Heart right ventricle (tissue), 16 donors: ENCODE measurements at regions of chr9 and their contacts with region 1.

Region 1: DNA sequence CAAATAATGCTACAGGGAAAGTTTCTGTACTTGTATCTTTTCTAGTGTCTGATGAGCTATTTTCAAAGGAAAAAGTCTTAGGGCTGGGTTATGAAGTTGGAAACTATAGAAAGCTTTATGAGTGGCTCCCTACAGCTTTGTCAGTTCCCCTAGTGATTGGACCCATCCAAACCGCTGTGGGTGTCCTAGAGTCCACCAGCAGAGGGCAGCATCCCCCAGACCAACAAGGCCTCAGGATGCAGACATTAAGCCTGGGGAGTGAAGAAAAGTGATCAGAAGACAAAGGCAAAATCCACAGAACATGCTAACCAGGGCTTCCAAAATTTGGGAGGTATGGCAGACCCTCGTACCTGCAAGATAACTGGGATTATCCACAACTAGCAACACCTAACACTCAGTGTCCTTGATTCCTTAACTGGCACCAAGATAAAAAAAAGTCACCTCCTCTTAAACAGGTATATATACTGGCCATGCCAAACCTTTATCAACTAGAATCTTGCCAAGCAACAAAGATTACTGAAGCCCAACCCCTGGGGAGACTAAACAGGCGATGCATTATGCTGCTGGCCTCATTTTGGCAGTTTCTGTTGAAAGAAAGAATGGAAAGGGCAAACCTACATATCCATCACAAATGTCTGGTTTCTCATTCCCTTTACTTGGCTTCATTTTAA is 110.4 kb upstream of the NR5A1 start:
- DNase-seq: peak; percentile 72 to 80
- ATAC-seq: peak; percentile 80 to 95 (median 89)
- H3K4me3 ChIP-seq: no peak overlapping the region
- H3K27ac ChIP-seq: no peak overlapping the region
- H3K4me1 ChIP-seq: peaks cover 0 to 12% (median 4%) of the 10 kb centered on the region in 9 donors
- H3K27me3 ChIP-seq: peaks cover 0 to 3% (median 0%) of the 10 kb centered on the region in 7 donors
- CTCF ChIP-seq: peak; percentile 71 to 95 (median 89)

Region 2: DNA sequence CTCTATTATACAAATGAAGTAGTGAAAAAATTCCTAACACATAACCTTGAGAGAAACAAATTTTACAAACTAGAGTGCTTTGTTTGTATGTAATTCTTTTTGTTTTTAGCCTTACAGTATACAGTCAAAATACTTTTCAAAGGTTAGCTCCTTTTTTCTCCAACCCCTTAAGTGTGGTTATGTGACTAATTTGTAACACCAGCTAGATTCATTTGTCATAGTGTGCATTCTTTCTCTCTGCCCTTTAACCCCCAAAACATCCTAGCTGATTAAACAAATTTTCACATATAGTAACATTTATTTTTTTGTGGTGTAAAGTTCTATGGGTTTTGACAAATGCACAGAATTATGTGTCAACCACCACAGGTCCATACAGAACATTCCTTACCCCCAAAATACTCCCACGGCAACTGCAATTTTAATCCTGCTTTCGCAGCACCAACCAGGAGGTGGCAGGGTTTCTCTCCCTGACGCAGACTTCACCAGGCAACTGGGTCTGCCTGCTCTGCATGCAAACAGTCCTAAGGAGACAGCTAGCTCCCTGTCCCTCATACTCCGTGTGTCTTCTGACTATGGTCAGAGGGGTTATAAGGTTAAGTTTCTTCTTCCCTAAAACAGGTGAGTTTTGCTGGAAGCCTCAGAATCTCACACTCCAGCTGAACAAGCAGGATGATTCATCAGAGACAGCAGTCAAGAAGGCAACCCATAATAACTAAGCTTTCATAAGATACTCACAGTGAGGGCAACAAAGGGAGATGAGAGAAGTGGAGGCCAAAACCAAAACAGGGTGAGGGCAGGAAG is 65.9 kb before region 1 on chr9:
- intact Hi-C with region 1: loop called in 1 of 10 experiments (anchors 5 kb)
- DNase-seq: peak in 1 of 2 donors; percentile 30
- ATAC-seq: peak in 7 of 8 donors; percentile 66 to 84 (median 75)
- H3K4me3 ChIP-seq: no peak overlapping the region
- H3K27ac ChIP-seq: no peak overlapping the region
- H3K4me1 ChIP-seq: peaks cover 0 to 10% (median 0%) of the 10 kb centered on the region in 9 donors
- H3K27me3 ChIP-seq: no peaks in the 10 kb centered on the region
- CTCF ChIP-seq: peak in 7 of 9 donors; percentile 47 to 70 (median 60)

Region 3: GRCh38 chr9:124652203-124652992 is 34.8 kb after region 1 on chr9:
- intact Hi-C with region 1: loop called in 3 of 10 experiments (anchors 2 to 5 kb)
- DNase-seq: peak in 1 of 2 donors; percentile 23
- ATAC-seq: peak; percentile 49 to 96 (median 86)
- H3K4me3 ChIP-seq: no peak overlapping the region
- H3K27ac ChIP-seq: peak overlapping the region in 6 of 10 donors; percentile 10 to 72 (median 58)
- H3K4me1 ChIP-seq: peaks cover 0 to 17% (median under 1%) of the 10 kb centered on the region in 9 donors
- H3K27me3 ChIP-seq: no peaks in the 10 kb centered on the region
- CTCF ChIP-seq: no peak

Region 4: DNA sequence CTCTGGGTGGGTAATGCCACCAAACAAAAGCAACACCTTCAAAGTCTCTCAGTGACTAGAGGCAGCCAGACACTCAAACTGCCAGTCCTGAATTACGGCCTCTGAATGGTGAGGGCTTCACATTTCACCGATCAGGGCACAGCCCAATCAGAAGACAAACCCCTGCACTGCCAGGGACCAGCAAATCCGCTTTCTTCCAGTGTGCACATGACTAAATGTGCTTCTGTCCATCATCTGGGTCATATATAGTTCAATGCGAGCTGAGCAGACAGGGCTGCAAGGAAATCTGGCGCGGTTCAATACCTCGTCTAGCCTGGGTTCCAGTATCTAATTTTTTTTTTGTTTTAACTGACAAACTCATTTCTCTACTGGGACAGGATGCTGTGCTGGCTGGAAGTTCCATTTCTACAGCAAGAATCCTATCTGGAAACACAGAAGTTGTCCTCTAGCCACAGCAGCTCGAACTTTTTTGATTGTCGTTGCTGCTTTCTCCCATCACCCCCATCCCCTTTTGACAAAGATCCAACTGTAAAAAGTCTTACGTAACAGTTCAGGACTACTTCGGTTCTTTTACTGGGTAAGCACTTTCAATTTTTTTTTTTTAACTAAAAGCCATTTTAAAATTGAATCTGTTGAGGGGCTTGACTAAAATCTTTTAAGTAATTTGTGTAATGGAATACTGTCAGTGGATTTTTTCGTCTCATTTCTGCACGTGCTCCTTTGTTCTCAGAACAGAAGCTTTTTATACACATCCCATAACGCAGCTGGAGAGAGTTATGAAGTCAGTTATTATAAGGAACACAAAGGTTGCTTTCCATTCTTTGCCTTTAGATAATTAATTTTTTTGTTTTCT is 40.8 kb after region 1 on chr9:
- intact Hi-C with region 1: loop called in 2 of 10 experiments (anchors 5 kb)
- DNase-seq: peak; percentile 35 to 85
- ATAC-seq: peak; percentile 94 to 98 (median 96)
- H3K4me3 ChIP-seq: peak overlapping the region; percentile 23 to 68 (median 58)
- H3K27ac ChIP-seq: peak overlapping the region; percentile 44 to 86 (median 80)
- H3K4me1 ChIP-seq: peaks cover 0 to 55% (median 20%) of the 10 kb centered on the region in 9 donors
- H3K27me3 ChIP-seq: no peaks in the 10 kb centered on the region
- CTCF ChIP-seq: no peak

Region 5: GRCh38 chr9:124686918-124687317 is 69.3 kb after region 1 on chr9:
- intact Hi-C with region 1: no loop called
- DNase-seq: no peak
- ATAC-seq: peak in 5 of 8 donors; percentile 42 to 76 (median 63)
- H3K4me3 ChIP-seq: no peak overlapping the region
- H3K27ac ChIP-seq: no peak overlapping the region
- H3K4me1 ChIP-seq: peaks cover 0 to 17% (median 4%) of the 10 kb centered on the region in 9 donors
- H3K27me3 ChIP-seq: no peaks in the 10 kb centered on the region
- CTCF ChIP-seq: no peak

Region 6: DNA sequence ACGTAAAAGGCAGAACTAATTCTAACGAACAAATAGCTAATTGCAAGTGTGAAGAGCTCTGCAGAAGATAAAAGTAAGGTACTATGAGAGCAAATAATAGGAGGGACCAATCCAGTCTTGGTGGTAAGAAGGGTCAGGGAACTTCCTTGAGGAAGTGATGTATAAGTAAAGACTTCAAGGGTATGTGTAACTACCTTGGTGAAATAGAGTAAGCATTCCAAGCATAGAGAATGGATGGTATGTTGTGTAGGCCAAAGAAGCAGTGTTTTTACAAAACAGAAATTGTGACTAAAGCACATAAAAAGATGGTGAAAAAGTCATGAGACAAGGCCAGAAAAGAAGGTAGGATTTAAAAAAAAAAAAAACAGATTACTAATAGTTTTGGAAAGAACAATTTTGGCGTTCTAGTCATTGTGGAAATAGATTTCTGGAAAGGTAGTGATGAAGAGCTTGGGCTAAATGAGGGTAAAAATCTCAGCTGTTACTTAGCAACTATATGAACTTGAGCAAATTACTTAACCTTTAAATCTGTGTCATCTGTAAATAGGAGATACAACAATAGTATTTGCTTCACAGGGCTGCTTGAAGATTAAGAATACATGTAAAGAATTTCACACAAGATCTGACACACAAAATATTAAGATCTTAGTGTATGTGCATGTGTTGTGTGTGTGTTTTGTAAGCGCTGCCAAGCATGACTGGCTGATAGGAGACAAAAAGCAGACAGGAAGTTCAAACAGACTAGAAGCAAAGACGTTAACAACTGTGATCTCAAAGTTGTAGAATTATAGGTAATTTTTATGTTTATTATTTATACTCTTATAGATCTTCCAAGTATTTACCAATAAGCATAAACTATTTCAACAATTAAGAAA is 80.0 kb after region 1 on chr9:
- intact Hi-C with region 1: loop called in 1 of 10 experiments (anchors 5 kb)
- DNase-seq: peak in 1 of 2 donors; percentile 17
- ATAC-seq: peak in 3 of 8 donors; percentile 56 to 69 (median 62)
- H3K4me3 ChIP-seq: no peak overlapping the region
- H3K27ac ChIP-seq: no peak overlapping the region
- H3K4me1 ChIP-seq: peaks cover 0 to 18% (median 0%) of the 10 kb centered on the region in 9 donors
- H3K27me3 ChIP-seq: no peaks in the 10 kb centered on the region
- CTCF ChIP-seq: no peak

Region 7: GRCh38 chr9:124708633-124709291 is 91.2 kb after region 1 on chr9:
- intact Hi-C with region 1: loop called (anchors 1 to 5 kb)
- DNase-seq: no peak
- ATAC-seq: no peak
- H3K4me3 ChIP-seq: no peak overlapping the region
- H3K27ac ChIP-seq: no peak overlapping the region
- H3K4me1 ChIP-seq: peaks cover 0 to 15% (median 4%) of the 10 kb centered on the region in 9 donors
- H3K27me3 ChIP-seq: no peaks in the 10 kb centered on the region
- CTCF ChIP-seq: no peak